ENCODE measurements at regions of chr2 and their contacts with region 1.

Region 1: GRCh38 chr2:190277234-190278112 is 42.2 kb downstream of the HIBCH start:
- DNase-seq: peak; percentile 32
- ATAC-seq: peak; percentile 73
- H3K4me3 ChIP-seq: no peak overlapping the region
- H3K27ac ChIP-seq: no peak overlapping the region
- H3K4me1 ChIP-seq: peaks cover 22% of the 10 kb centered on the region
- H3K27me3 ChIP-seq: no peaks in the 10 kb centered on the region
- CTCF ChIP-seq: peak; percentile 51
- EP300 ChIP-seq: no peak
- POLR2A ChIP-seq: no peak
- RAD21 ChIP-seq: no peak

Region 2: DNA sequence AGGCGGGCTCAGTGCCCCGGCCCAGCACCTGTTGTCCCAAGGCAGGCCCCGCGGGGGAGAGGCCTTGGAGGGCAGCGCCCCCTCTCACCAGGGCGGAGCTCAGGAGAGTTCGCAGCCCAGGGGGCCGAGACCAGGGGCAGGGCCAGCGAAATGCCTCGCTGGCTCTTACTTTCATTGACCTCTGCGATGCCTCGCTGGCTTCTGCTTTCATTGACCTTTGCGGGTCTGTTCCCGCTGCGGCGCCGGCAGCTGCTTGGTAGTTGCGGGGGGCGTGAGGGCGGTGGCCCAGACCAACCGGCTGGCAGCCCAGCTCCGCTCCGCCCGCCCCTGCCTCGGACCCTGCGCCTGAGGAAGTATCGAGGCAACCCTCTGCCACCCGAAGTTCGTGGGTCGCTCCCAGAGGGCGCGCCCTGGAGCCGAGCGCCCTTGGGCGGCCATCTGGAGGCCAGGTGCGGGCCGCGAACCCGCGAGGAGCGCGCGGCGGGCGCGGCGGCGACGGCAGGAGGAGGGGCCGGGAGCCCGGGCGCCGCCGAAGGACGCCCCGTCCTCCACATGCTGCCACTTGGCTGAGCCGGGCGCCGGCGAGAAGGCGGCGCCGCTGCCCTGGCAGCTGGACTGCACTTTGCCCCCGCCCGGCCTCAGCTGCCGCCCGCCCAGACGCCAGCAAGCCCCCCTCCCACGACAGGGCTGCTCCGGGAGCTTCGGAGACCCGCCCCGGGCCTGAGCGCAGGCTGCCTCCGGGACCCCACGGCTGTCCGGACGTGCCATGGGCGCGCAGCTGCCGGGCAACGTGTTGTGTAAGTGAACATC is 97.0 kb before region 1 on chr2:
- CTCF ChIA-PET with region 1: no interaction called
- POLR2A ChIA-PET with region 1: no interaction called
- in situ Hi-C with region 1: no loop called
- intact Hi-C with region 1: loop called (anchors 1 kb)
- DNase-seq: peak; percentile 86
- ATAC-seq: peak; percentile 94
- H3K4me3 ChIP-seq: peak overlapping the region; percentile 63 to 89 (median 77)
- H3K27ac ChIP-seq: peak overlapping the region; percentile 64
- H3K4me1 ChIP-seq: peaks cover 23% of the 10 kb centered on the region
- H3K27me3 ChIP-seq: no peaks in the 10 kb centered on the region; a peak in 1 of 5 replicates
- CTCF ChIP-seq: peak; percentile 95
- EP300 ChIP-seq: 0 out of 4 replicates have a peak, but pooled peaks of 1 of the 2 experiments have one; percentile 6
- POLR2A ChIP-seq: peak; percentile 31 to 80
- RAD21 ChIP-seq: peak; percentile 92

Region 3: DNA sequence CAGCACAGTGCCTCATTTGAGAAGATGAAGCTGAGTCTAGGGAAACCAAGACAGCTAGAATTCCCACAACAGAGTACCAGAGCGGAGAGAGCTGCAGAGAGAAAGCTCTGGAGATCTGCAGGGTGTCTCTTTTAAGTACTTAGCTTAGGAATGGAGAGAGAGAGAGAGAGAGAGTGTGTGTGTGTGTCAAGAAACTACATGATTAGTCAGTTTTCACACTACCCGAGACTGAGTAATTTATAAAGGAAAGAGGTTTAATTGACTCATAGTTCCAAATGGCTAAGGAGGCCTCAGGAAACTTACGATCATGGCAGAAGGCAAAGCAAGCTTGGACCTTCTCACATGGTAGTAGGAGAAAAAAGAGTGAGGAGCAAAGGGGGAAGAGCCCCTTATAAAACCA is 21.8 kb before region 1 on chr2:
- CTCF ChIA-PET with region 1: no interaction called
- POLR2A ChIA-PET with region 1: no interaction called
- in situ Hi-C with region 1: no loop called
- intact Hi-C with region 1: no loop called
- DNase-seq: no peak
- ATAC-seq: no peak
- H3K4me3 ChIP-seq: no peak overlapping the region
- H3K27ac ChIP-seq: no peak overlapping the region
- H3K4me1 ChIP-seq: no peaks in the 10 kb centered on the region
- H3K27me3 ChIP-seq: no peaks in the 10 kb centered on the region
- CTCF ChIP-seq: no peak
- EP300 ChIP-seq: no peak
- POLR2A ChIP-seq: no peak
- RAD21 ChIP-seq: no peak

Region 4: DNA sequence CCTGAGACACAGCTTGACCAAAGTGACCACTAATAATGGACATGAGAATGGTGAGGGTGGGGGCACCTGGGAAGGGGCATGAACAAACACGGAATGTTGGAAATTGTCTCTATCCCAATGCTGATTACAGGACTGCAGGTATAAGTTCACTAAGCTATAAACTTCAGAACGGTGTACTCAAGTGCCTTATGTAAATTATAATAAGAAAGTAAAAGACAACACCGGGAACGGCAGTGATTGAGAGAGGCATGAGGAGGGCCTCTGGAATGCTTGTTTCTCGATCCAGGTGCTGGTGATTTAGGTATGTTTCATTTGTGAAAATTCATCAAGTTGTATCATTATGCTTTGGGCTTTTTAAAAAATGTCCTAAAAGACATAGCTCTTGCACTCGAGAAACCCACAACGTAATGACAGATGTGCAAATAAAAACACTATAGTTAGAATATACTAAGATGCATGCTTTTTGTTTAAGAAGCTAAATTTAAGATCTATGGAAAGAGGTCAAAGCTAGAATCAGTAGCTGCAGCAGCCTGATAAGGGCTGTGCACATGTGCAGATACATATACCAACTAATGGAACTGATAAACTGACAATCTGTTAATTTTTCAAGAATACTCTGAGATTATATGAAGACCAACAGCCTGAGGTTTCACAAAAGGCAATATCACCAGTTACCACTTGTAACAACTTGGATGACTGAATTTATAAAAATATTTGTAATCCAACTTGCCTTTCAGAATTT is 34.6 kb after region 1 on chr2:
- CTCF ChIA-PET with region 1: no interaction called
- POLR2A ChIA-PET with region 1: no interaction called
- in situ Hi-C with region 1: no loop called
- intact Hi-C with region 1: no loop called
- DNase-seq: no peak
- ATAC-seq: no peak
- H3K4me3 ChIP-seq: no peak overlapping the region
- H3K27ac ChIP-seq: no peak overlapping the region
- H3K4me1 ChIP-seq: peaks cover 38% of the 10 kb centered on the region
- H3K27me3 ChIP-seq: no peaks in the 10 kb centered on the region
- CTCF ChIP-seq: no peak
- EP300 ChIP-seq: no peak
- POLR2A ChIP-seq: no peak
- RAD21 ChIP-seq: no peak

Region 5: GRCh38 chr2:190718652-190719526 is 441.4 kb after region 1 on chr2:
- CTCF ChIA-PET with region 1: no interaction called
- POLR2A ChIA-PET with region 1: no interaction called
- in situ Hi-C with region 1: no loop called
- intact Hi-C with region 1: no loop called
- DNase-seq: peak; percentile 30
- ATAC-seq: peak; percentile 78
- H3K4me3 ChIP-seq: no peak overlapping the region
- H3K27ac ChIP-seq: no peak overlapping the region
- H3K4me1 ChIP-seq: no peaks in the 10 kb centered on the region
- H3K27me3 ChIP-seq: peaks cover 2 to 10% of the 10 kb centered on the region in 2 experiments; a peak in 4 of 5 replicates
- CTCF ChIP-seq: no peak
- EP300 ChIP-seq: no peak
- POLR2A ChIP-seq: no peak
- RAD21 ChIP-seq: no peak